ENCODE measurements at regions of chr14 and their contacts with region 1.

Region 1: DNA sequence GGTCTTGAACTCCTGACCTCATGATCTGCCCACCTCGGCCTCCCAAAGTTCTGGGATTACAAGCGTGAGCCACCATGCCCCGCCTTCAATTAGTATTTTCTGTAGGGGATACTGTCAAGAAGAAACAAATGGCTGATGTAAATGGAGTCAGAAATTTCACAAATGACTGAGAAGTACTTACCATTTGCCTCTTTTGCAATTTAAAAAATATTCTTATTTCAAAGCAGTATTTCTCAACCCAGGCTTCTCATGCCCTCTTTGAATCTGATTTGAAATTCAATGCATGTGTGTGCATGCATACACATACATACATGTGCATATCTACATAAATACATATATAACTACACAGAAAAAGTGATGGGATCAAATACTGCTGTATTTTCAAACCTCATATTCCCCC is 4.4 kb downstream of the PSMA6 start:
- DNase-seq: no peak
- H3K27ac ChIP-seq: peak overlapping the region; percentile 57
- CTCF ChIP-seq: no peak

Region 2: DNA sequence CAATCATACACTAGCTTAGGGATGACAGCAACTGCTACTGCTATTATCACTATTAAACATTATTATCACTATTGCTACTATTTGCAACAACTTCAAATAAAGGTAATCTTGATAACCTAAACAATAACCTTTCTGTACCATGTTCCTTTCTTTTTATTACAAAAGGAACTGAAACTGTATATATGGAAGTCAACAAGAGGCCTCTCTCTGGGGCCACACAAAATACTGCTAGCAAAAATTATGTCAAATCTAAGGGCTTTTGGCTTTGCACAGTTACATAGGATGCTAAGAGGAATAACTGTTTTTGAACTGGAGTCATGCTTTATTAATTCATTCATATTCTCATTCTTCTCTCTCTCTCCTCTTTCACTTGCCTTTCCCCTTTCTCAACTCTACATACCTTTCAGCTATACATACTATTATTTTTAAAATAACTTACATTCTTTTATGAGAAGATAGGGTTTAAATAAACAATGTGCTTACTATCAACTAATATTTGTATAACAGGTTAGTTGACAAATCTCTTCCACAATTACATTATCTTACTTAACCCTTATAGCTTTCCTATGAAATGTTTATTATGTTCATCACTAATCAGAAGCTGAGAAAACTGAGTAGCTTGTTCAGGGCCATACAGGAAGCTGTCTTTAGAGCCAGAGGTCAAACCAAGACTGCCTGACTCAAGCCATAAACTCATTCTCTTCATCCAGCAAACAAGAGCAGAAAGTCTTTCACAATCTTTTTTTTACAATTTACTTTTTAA is 860.2 kb before region 1 on chr14:
- CTCF ChIA-PET with region 1: no interaction called
- POLR2A ChIA-PET with region 1: interaction called, 14 read pairs
- DNase-seq: no peak
- H3K27ac ChIP-seq: no peak overlapping the region
- CTCF ChIP-seq: no peak

Measured in RWPE1 (cell line).